Heart right ventricle (tissue), 16 donors: ENCODE measurements at regions of chr11 and their contacts with region 1.

Region 1: DNA sequence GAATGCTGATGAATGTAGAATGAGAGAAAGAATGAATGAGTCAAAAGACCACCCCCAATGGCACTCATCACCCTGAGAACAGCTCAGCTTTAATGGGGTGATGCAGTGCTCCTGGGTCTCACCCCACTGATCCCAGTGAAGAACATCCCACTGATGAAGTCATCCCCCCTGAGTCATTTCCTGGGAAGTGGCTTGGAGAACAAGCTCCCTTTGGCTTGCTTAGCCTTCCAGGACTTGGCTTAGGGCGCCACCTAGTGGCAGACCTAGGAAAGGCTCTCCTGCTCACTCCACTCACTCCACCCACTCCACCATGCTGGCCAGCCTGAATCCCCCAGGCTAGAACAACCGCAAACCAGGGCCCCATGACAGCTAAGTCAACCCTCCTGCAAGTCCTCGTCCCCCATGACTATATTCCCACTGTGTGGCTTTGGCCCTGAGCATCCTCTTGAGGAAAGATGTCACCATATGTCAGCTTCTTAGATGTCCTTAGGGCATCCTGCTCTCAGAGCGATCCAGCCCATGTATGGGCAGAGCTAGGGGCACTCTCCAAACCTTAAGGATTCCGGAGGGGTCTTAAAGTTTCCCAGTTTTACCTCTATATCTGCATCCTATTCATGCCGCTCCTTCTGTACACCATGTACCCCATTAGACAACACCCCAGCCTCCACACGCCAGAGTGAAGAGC is 17.8 kb upstream of the TMPRSS13 start:
- DNase-seq: peak; percentile 91 to 92
- ATAC-seq: peak; percentile 91 to 98 (median 96)
- H3K4me3 ChIP-seq: no peak overlapping the region
- H3K27ac ChIP-seq: no peak overlapping the region
- H3K4me1 ChIP-seq: peaks cover 0 to 56% (median 24%) of the 10 kb centered on the region in 9 donors
- H3K27me3 ChIP-seq: peaks cover 0 to 8% (median 0%) of the 10 kb centered on the region in 7 donors
- CTCF ChIP-seq: peak; percentile 94 to 99 (median 98)

Region 2: GRCh38 chr11:117426269-117426685 is 520.7 kb before region 1 on chr11:
- intact Hi-C with region 1: loop called in 5 of 10 experiments (anchors 5 to 10 kb)
- DNase-seq: peak; percentile 51 to 76
- ATAC-seq: peak; percentile 27 to 74 (median 68)
- H3K4me3 ChIP-seq: no peak overlapping the region
- H3K27ac ChIP-seq: no peak overlapping the region
- H3K4me1 ChIP-seq: peaks cover 0 to 7% (median 0%) of the 10 kb centered on the region in 9 donors
- H3K27me3 ChIP-seq: peaks cover 0 to 4% (median 0%) of the 10 kb centered on the region in 7 donors
- CTCF ChIP-seq: peak; percentile 82 to 97 (median 95)

Region 3: DNA sequence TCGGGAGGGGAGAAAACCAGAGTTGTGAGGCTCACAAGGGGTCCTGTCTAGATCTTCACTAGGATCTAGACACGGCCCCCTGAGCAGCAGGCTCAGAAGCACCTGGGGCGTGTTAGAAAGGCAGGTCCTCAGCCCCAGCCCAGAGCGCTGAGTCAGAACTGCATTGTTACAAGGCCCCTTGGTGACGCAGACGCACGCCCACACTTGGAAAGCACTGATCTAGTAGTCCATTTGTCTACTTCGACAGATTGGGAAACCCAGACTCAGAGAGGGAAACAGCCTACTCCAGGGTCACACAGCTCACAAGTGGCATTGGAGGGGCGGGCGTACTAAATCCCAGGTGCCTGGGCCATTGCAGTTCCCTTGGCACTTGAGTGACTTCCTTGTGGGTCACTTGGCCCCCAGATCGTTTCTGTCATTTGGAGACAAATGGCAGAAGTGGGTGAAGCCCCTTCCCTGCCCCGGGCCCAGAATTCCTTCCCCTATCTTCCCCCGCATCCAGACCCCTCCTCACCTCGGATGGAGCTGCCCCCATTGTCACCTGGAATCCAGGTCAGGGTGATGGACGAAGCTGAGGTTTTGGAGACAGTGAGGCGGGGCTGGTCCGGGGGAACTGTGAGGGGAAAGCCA is 508.5 kb before region 1 on chr11:
- intact Hi-C with region 1: loop called in 2 of 10 experiments (anchors 10 kb)
- DNase-seq: no peak
- ATAC-seq: no peak
- H3K4me3 ChIP-seq: no peak overlapping the region
- H3K27ac ChIP-seq: no peak overlapping the region
- H3K4me1 ChIP-seq: peaks cover 0 to 2% (median 0%) of the 10 kb centered on the region in 9 donors
- H3K27me3 ChIP-seq: peaks cover 0 to 12% (median 0%) of the 10 kb centered on the region in 7 donors
- CTCF ChIP-seq: no peak

Region 4: DNA sequence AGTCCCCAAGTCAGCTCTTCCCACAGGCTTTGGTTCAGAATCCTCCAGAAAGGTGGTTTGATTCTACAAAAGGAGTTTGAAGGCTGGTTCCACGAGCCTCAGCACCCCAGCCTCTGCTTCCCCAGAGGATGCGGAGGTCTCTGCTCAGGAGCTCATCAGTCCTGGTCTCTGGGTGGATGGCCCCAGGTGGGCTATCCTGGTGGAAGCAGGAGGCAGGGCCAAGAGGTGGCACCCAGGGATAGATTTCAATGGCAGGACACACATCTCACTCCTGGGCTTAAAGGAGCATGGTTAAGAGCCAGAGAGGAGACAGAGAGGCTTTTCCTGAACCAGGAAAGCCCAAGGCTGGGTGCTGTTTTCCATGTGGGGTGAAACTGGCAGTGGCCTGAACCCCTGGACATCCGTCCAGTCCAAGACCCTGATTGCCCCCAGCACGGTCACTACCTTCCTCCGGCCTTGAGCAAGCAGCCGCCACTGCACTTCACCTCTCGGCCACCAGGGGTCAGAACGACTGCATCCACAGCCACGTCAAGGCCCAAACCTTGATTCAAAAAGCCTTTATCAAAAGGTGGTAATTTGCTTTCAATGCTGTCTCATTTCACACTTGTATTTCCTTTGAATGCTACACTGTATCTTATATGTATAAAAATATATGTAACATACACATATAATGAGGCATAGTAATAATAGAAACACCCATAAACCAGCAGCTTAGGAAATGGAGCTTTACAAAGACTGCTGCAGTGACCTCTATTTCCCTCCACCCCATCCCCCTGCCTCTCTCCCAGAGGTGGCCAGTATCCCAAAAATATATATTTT is 103.1 kb before region 1 on chr11:
- intact Hi-C with region 1: loop called (anchors 1 to 5 kb)
- DNase-seq: peak; percentile 84 to 88
- ATAC-seq: peak; percentile 59 to 84 (median 76)
- H3K4me3 ChIP-seq: no peak overlapping the region
- H3K27ac ChIP-seq: peak overlapping the region in 3 of 10 donors; percentile 21 to 44 (median 30)
- H3K4me1 ChIP-seq: peaks cover 0 to 36% (median 24%) of the 10 kb centered on the region in 9 donors
- H3K27me3 ChIP-seq: no peaks in the 10 kb centered on the region
- CTCF ChIP-seq: peak; percentile 97 to 100 (median 99)

Region 5: DNA sequence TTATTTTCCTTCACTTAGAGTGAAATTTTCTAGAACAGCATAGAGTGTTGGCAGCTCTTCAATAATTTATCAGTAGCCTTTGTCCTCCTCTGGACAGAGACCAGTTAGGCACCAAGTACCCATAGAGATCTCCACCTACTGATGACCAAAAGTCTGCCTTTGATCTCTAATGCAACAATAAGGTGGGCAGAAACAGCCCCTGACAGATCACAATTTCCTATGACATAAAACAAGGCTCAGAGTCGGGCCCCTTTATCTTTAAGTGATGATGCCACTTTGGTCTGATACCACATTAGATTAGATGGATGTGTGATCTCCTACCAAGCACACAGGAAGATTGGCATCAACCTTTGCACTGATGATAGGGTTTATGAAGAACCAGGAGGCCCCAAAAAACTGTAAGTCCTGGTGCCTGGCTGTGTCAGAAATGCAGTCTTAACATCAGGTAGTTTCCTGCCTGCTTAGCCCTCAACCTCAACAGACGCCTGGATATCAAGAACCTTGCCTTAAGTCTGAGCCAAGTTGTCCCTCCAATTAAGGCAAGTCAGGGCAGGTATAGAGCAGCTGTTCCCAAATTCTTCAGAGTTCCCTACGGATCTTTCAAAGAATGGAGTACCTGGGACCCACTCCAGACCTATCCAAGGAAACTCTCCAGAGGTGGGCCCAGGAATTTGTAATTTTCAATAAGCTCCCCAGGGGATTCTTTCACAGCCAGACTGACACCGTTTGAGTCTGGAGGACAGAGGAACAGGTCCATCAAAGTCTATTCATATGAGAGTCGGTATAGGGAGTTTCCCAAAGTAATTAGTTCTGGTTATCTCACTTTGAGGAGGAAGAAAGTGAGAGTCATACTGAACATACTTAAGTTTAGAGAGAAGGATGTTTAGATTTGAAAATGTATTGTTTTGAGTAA is 99.3 kb after region 1 on chr11:
- intact Hi-C with region 1: loop called in 7 of 10 experiments (anchors 2 to 10 kb)
- DNase-seq: no peak
- ATAC-seq: no peak
- H3K4me3 ChIP-seq: no peak overlapping the region
- H3K27ac ChIP-seq: peak overlapping the region in 1 of 10 donors; percentile 68
- H3K4me1 ChIP-seq: peaks cover 0 to 13% (median 0%) of the 10 kb centered on the region in 9 donors
- H3K27me3 ChIP-seq: no peaks in the 10 kb centered on the region
- CTCF ChIP-seq: no peak

Region 6: GRCh38 chr11:118435290-118435892 is 488.4 kb after region 1 on chr11:
- intact Hi-C with region 1: no loop called
- DNase-seq: peak; percentile 33 to 49
- ATAC-seq: peak in 7 of 8 donors; percentile 7 to 55 (median 41)
- H3K4me3 ChIP-seq: peak overlapping the region; percentile 47 to 100 (median 97)
- H3K27ac ChIP-seq: peak overlapping the region; percentile 78 to 95 (median 93)
- H3K4me1 ChIP-seq: peaks cover 4 to 47% (median 35%) of the 10 kb centered on the region in 9 donors
- H3K27me3 ChIP-seq: no peaks in the 10 kb centered on the region
- CTCF ChIP-seq: no peak